GM13977 (cell line): ENCODE measurements at regions of chr3 and their contacts with region 1.

Region 1: GRCh38 chr3:124559881-124560574 is 170.2 kb upstream of the UMPS start:
- DNase-seq: peak; percentile 80
- CTCF ChIP-seq: peak; percentile 88

Region 2: GRCh38 chr3:124688581-124689454 is 128.8 kb after region 1 on chr3:
- in situ Hi-C with region 1: loop called (anchors 5 kb)
- DNase-seq: peak; percentile 82
- CTCF ChIP-seq: peak; percentile 83